Activated B cell treated with CpG ODN at 0.5 μM for 24 hours (primary cell): ENCODE measurements at regions of chr7 and their contacts with region 1.

Region 1: GRCh38 chr7:113118074-113118959 is at the start of gene SMIM30:
- DNase-seq: peak; percentile 77
- ATAC-seq: peak; percentile 100
- H3K4me3 Mint-ChIP-seq: peak within 1 kb of the TSS; percentile 93
- H3K27ac Mint-ChIP-seq: peak within 1 kb of the TSS; percentile 97
- H3K4me1 Mint-ChIP-seq: peaks cover 23% of the 10 kb centered on the region
- H3K27me3 Mint-ChIP-seq: no peaks in the 10 kb centered on the region
- CTCF ChIP-seq: no peak
- total RNA-seq, gene SMIM30: 28.7 and 30.6 TPM in 2 replicates

Region 2: DNA sequence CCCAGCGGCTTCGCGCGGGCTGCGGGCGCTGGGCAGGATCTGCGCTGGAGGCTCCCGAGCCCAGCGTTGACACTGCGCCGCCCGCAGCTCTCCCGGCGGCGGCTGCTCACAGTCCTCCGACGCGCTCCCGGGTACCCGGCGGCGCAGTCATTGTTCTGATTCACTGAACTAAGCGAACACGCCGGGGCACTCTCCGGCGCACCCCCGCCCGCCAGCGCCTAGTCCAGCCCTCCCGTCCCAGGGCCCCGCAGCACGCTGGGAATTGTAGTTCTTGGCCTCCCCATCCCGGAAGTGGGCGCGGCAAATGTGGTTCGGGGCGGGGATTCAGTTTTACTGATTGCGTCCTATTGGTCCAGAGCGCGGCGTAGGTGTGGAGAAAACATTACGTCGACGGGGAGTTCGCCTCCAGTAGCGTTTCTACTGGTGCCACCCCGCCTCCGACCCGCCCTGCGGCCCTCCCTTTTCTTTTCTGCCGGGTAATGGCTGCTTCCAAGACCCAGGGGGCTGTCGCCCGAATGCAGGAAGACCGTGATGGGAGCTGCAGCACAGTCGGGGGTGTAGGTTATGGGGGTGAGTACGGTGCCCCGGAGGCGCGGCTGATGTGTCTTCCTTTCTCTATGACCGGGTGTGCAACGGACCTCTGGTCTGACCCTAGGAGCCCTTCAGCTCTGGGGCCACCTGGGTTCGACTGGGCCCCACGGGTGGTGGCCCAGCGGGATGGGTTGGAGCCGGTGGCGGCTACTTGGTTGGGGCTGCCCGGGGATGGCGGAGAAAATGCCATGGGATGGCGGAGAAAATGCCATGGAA is 911.9 kb before region 1 on chr7 and contains the starts of genes DOCK4 and ZNF277:
- CTCF ChIA-PET with region 1: no interaction called
- POLR2A ChIA-PET with region 1: no interaction called
- intact Hi-C with region 1: loop called (anchors 1 kb)
- DNase-seq: peak; percentile 99
- ATAC-seq: peak; percentile 90
- H3K4me3 Mint-ChIP-seq: peak within 1 kb of the TSS; percentile 97
- H3K27ac Mint-ChIP-seq: peak within 1 kb of the TSS; percentile 83
- H3K4me1 Mint-ChIP-seq: peaks cover 37% of the 10 kb centered on the region
- H3K27me3 Mint-ChIP-seq: peaks cover 25% of the 10 kb centered on the region
- CTCF ChIP-seq: no peak
- total RNA-seq, gene DOCK4: 0.61 and 0.73 TPM in 2 replicates
- total RNA-seq, gene ZNF277: 12.6 and 13.1 TPM in 2 replicates

Region 3: DNA sequence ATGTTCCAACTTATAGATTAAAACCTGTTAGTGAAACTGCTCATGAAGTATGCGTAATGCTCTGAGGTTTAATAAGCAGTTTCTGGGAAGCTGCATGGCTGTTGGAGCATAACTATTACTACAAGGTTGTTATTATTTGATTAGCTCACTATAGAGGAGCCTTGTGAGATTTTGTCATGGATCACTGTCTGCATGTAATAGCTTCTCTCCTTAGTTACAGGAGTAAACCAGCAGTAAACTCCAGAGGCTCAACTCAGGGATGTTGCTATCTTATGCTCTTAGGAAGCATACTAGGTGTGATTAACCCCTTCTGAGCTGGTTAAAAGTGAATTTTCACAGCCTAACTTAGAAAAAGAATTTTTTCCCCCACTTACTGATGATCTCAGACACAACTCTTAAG is 731.7 kb before region 1 on chr7:
- CTCF ChIA-PET with region 1: no interaction called
- POLR2A ChIA-PET with region 1: no interaction called
- intact Hi-C with region 1: loop called (anchors 5 kb)
- DNase-seq: no peak
- ATAC-seq: no peak
- H3K4me3 Mint-ChIP-seq: no peak overlapping the region
- H3K27ac Mint-ChIP-seq: no peak overlapping the region
- H3K4me1 Mint-ChIP-seq: peaks cover 5% of the 10 kb centered on the region
- H3K27me3 Mint-ChIP-seq: peaks cover 5% of the 10 kb centered on the region
- CTCF ChIP-seq: no peak

Region 4: DNA sequence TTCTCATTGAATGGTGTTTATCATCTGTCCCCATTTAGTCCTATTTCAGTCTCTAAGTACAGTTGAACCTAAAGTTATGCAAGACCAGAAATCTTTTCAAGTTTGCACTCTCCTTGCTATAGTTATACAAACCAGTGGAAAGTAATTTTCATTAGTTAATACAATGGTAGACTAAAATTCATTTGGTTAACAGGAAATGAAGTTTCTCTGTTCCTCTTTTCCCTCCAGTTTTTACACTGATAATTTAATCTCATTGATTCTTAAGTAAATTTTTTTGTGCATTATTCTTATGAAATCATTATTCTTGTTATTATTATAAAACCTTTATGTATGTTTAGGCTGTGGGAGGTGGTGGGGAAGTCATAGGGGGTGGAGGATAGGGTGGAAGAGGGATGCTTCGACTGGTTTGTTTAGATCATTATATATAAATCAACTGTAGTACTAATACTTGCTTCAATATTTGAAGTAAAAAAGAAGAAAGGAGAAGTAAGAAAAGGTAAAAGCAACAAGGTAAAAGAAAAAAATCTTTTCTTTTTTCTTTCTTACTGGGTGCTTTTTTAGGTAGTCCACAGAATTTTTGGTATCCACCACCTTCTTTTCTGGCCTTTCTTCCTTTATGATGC is 135.8 kb before region 1 on chr7:
- CTCF ChIA-PET with region 1: no interaction called
- POLR2A ChIA-PET with region 1: no interaction called
- intact Hi-C with region 1: loop called (anchors 2 kb)
- DNase-seq: no peak
- ATAC-seq: peak; percentile 62
- H3K4me3 Mint-ChIP-seq: no peak overlapping the region
- H3K27ac Mint-ChIP-seq: peak overlapping the region; percentile 79
- H3K4me1 Mint-ChIP-seq: peaks cover 28% of the 10 kb centered on the region
- H3K27me3 Mint-ChIP-seq: no peaks in the 10 kb centered on the region
- CTCF ChIP-seq: no peak